Heart left ventricle (tissue), 16 donors: ENCODE measurements at regions of chr19 and their contacts with region 1.

Region 1: DNA sequence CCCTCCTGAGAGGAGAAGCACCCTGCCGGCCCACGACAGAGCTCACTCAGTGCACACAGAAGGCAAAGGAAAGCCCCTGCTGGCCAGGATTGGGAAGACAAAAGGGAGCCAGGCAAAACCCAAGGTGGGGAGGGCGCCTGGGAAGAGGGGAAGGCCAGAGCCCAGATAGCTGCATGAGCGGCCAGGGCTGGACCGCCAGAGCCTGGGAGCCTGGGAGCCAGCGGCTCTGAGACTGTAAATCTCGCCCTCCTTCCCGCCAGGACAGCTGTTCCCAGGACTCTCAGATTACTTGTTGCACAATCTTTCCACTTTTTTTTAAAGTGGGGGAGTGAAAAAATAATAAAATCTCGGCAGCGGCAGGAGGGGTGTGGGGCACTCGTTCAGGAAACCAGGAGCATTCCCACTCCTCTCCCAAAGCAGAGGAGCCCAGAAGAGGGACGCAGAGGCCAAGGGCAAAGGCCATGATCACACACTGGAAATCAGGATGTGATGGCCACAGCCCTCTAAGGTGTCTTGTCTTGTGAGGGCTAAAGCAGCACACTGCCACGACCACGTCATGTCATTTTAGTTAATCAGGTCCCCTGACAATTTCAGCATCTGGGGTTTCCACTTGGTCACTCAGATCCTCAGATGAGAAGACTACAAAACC is 19.6 kb upstream of the EPHX3 start:
- DNase-seq: peak; percentile 86 to 92 (median 89)
- ATAC-seq: peak; percentile 67 to 76 (median 69)
- H3K4me3 ChIP-seq: peak overlapping the region in 7 of 12 donors; percentile 14 to 44 (median 24)
- H3K27ac ChIP-seq: peak overlapping the region; percentile 78 to 99 (median 90)
- H3K4me1 ChIP-seq: peaks cover 20 to 73% (median 70%) of the 10 kb centered on the region in 12 donors
- H3K27me3 ChIP-seq: no peaks in the 10 kb centered on the region
- CTCF ChIP-seq: peak in 11 of 12 donors; percentile 24 to 71 (median 47)
- POLR2A ChIP-seq: no peak

Region 2: GRCh38 chr19:13888240-13888639 is 1363.6 kb before region 1 on chr19:
- intact Hi-C with region 1: no loop called
- DNase-seq: no peak
- ATAC-seq: no peak
- H3K4me3 ChIP-seq: no peak overlapping the region
- H3K27ac ChIP-seq: no peak overlapping the region
- H3K4me1 ChIP-seq: peaks cover 0 to 8% (median 0%) of the 10 kb centered on the region in 12 donors
- H3K27me3 ChIP-seq: no peaks in the 10 kb centered on the region
- CTCF ChIP-seq: no peak
- POLR2A ChIP-seq: no peak

Region 3: DNA sequence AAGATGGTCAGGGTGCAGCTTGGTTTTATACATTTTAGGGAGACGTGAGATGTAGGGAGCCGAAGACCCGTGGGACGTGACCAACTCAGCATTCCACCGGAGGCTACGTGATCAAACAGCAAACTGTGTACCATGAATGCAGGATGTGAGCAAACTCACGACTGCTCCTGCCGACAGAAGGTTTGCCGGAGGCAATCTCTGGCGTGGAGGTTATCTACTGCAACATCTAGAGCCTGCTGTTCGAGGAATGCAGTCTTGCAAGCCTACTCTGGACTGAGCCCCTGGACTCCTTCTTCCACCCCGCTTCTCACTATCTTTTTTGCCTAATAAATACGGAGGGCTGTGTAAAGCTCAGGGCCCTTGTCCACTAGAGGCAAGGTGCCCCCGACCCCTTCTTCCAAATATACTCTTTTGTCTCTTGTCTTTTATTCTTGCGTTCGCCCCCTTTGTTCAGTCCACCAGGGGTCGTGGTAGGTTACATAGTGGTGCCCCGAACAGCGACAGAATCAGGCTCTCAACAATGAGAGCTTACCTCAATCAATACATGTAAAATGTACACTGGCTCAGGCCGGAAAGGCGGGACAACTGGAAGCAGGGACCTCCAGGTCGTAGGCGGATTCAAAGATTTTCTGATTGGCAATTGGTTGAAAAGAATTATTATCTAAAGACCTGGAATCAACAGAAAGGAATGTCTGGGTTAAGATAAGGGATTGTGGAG is 178.8 kb before region 1 on chr19:
- intact Hi-C with region 1: no loop called
- DNase-seq: no peak
- ATAC-seq: no peak
- H3K4me3 ChIP-seq: no peak overlapping the region
- H3K27ac ChIP-seq: no peak overlapping the region
- H3K4me1 ChIP-seq: no peaks in the 10 kb centered on the region
- H3K27me3 ChIP-seq: peaks cover 0 to 11% (median 0%) of the 10 kb centered on the region in 9 donors
- CTCF ChIP-seq: no peak
- POLR2A ChIP-seq: no peak

Region 4: DNA sequence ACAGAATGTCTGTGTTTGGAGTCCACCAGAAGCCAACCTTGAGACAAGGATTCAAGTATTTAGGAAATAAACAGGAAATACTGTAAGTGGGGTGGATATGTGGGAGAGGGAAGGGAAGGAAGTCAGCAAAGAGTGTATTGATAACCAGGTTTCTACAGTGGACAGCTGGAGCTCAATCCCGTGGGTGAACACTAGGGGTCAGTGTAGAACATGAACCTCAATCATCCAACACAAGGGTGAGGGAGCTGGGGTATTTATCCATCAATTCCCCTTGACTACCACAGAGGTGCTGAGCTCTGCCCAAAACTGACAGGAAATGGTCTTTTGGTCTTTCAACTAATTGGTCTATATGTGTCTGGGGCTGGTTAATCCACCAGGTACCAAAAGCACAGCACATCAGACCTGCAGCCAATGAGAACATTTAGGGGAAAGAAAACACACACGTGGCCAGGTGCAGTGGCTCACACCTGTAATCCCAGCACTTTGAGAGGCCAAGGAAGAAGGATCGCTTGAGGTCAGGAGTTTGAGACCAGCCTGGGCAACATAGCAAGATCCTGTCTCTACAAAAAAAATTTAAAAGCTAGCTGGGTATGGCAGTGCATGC is 150.3 kb before region 1 on chr19:
- intact Hi-C with region 1: loop called in 3 of 10 experiments (anchors 10 kb)
- DNase-seq: no peak
- ATAC-seq: peak in 3 of 4 donors; percentile 53 to 75 (median 71)
- H3K4me3 ChIP-seq: no peak overlapping the region
- H3K27ac ChIP-seq: no peak overlapping the region
- H3K4me1 ChIP-seq: peaks cover 0 to 6% (median under 1%) of the 10 kb centered on the region in 12 donors
- H3K27me3 ChIP-seq: no peaks in the 10 kb centered on the region
- CTCF ChIP-seq: peak; percentile 63 to 79 (median 70)
- POLR2A ChIP-seq: no peak

Region 5: DNA sequence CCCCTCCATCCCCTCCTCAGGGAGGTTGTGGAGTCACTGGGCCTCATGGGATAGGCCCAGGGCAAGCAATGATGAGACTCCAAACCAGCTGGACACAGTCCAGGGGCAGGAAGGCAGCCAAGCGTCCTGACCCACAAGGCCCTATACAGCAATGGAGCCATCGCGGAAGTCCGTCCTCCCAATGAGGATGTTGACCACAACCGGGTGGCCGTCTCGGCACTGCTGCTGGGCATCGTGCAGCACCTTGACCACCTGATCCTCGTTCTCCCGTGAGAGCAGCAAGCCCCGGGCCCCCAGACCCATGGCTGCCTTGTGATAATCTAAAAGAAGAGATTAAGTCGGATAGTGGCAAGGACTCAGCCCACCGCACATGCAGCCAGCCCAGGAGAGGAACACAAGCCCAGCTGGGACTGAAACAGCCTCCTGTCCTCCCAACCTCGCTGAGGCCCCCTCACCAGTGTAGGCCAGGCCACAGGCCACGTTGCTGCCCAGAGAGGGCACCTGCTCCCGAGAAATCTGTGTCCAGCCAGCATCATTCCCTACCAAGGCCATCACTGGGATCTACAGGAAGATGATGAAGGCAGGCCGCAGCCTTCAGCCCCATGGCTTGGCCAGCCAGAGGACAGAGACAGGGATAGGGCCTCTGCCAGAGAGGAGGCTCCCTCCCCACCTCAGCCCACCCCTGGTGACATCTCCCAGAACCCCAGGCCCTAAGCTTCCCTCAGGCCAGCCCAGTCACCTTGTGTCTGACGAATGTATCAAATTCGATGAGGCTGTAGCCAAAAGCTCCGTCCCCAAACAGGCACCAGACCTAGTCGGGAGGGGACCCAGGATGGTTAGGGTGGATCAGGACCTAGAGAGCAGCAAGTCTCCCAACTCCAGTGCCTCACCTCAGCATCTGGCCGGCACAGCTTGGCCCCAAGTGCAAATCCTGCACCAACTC is 136.5 kb before region 1 on chr19:
- intact Hi-C with region 1: loop called in 2 of 10 experiments (anchors 5 to 10 kb)
- DNase-seq: peak; percentile 85 to 90 (median 87)
- ATAC-seq: peak; percentile 63 to 89 (median 70)
- H3K4me3 ChIP-seq: no peak overlapping the region
- H3K27ac ChIP-seq: peak overlapping the region in 11 of 12 donors; percentile 42 to 76 (median 55)
- H3K4me1 ChIP-seq: peaks cover 6 to 29% (median 16%) of the 10 kb centered on the region in 12 donors
- H3K27me3 ChIP-seq: no peaks in the 10 kb centered on the region
- CTCF ChIP-seq: no peak
- POLR2A ChIP-seq: no peak

Region 6: DNA sequence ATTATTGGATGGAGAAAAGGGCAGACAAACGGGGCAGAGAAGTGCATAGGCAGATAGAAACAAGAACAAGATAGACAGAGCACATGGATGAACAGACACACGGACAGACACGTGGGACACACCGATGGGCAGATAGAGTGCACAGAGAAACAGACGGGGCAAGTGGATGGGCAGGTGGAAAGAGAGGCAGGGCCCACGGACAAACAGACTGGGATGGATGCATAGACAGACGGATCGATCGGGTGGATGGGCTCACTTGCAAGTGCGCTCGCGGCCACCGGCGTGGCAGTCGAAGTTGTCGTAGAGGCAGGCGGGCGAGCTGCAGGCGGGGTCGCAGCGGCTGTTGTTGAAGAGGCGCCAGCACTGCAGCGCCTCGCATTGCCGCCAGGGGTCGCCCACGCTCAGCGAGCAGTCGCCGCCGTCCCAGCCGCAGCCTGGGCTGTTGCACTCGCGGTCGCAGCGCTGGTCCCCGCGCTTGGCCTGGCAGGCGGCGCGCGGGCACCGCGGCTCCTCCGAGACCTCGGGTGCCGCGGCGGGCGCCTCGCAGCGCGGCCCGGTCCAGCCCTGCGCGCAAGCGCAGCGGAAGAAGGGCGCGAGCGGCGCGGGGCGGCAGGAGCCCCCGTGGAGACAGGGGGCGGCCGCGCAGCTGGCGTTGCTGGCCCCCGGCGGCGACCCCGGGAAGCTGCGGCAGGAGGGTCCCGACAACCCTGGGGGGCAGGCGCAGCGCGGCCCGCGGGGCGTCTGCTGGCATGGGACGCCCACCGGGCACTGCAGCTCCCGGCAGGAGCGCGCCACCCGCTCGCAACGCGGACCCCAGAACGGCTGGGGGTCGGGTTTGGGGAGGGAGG is 74.4 kb before region 1 on chr19:
- intact Hi-C with region 1: loop called in 6 of 10 experiments (anchors 2 to 5 kb)
- DNase-seq: peak; percentile 76 to 93 (median 82)
- ATAC-seq: peak; percentile 41 to 91 (median 82)
- H3K4me3 ChIP-seq: peak overlapping the region in 7 of 12 donors; percentile 20 to 47 (median 34)
- H3K27ac ChIP-seq: peak overlapping the region in 1 of 12 donors; percentile 40
- H3K4me1 ChIP-seq: peaks cover 0 to 23% (median 2%) of the 10 kb centered on the region in 12 donors
- H3K27me3 ChIP-seq: peaks cover 0 to 11% (median 4%) of the 10 kb centered on the region in 9 donors
- CTCF ChIP-seq: peak; percentile 83 to 99 (median 96)
- POLR2A ChIP-seq: no peak

Region 7: DNA sequence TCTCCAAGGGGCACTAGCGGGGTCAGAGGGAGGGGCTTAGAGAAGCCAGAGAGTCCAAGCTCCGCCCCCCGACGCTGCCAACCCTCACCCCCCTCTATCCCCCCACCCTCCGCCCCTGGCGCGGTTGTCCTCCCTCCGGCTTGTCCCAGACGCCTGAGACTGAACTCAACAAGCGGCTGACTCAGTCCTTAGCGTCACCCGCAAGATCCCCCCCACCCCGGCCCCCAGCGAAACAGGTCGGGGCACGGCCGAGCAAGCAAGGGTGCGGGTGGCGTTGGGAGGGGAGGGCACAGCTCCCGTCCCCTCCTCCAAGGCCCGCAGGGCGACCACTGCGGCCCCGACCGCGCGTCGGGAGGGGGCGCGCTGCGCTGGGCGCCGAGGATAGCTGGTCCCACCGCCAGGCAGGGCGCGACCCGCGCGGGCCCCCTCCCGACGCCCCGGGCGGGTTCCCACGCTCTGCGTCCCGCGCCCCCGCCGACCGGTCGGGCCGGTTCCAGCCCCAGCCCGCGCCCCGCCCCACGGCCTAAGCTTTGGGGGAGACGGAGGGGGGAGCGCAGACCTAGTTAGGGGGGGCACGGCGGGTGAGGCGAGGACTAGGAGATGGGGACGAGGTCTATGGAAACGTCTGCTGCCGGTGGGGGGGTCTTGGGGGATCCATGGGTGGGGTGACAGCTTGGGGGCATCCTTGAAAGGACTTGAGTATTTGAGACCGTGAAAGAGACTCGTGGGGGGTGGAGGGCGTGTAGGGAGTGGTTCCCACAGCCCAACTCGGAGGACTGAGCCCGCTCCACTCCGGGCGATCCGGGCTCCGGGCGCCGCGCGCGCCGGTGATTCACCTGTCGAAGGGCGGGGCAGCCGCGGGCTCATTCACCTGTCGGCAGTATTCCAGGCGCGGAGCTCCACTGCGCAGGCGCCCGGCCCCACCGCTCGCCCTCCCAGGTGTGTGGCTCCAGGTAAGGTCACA is 56.2 kb before region 1 on chr19:
- intact Hi-C with region 1: loop called in 1 of 10 experiments (anchors 10 kb)
- DNase-seq: peak; percentile 48 to 78 (median 70)
- ATAC-seq: peak; percentile 37 to 66 (median 54)
- H3K4me3 ChIP-seq: peak overlapping the region in 11 of 12 donors; percentile 9 to 70 (median 53)
- H3K27ac ChIP-seq: peak overlapping the region; percentile 18 to 91 (median 52)
- H3K4me1 ChIP-seq: peaks cover 0 to 47% (median 13%) of the 10 kb centered on the region in 12 donors
- H3K27me3 ChIP-seq: peaks cover 9 to 63% (median 36%) of the 10 kb centered on the region in 9 donors
- CTCF ChIP-seq: peak in 6 of 12 donors; percentile 9 to 31 (median 22)
- POLR2A ChIP-seq: no peak

Region 8: DNA sequence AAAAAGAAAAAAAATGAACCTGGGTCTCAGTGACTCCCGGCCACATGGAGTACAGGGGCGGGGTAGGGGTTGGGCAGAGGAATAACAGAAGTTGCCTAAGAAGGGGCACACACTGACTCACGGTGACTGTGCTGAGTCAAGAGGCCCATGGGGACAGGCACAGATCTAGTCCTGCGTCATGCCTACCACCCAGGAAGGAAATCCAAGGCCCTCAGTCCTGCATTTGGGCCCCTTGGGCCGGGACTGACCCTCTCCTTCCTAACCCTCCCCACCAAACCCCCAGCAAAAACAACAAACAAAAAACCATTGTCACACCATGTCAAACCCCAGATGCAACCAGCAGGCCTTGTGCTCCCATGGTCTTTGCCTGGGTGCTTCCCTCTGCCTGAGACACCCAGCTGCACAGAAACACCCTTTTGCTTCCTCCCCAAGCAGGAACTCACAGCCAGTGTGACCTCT is 41.5 kb before region 1 on chr19:
- intact Hi-C with region 1: loop called in 2 of 10 experiments (anchors 5 kb)
- DNase-seq: peak in 4 of 5 donors; percentile 48 to 77 (median 70)
- ATAC-seq: peak; percentile 40 to 92 (median 78)
- H3K4me3 ChIP-seq: no peak overlapping the region
- H3K27ac ChIP-seq: peak overlapping the region in 9 of 12 donors; percentile 28 to 78 (median 50)
- H3K4me1 ChIP-seq: peaks cover 0 to 25% (median 6%) of the 10 kb centered on the region in 12 donors
- H3K27me3 ChIP-seq: peaks cover 0 to 6% (median 0%) of the 10 kb centered on the region in 9 donors
- CTCF ChIP-seq: no peak
- POLR2A ChIP-seq: no peak

Region 9: GRCh38 chr19:15555759-15556633 is 304.1 kb after region 1 on chr19:
- intact Hi-C with region 1: loop called in 1 of 10 experiments (anchors 10 kb)
- DNase-seq: peak; percentile 86 to 95 (median 91)
- ATAC-seq: peak; percentile 84 to 97 (median 95)
- H3K4me3 ChIP-seq: peak overlapping the region in 9 of 12 donors; percentile 23 to 49 (median 37)
- H3K27ac ChIP-seq: peak overlapping the region in 3 of 12 donors; percentile 12 to 31 (median 26)
- H3K4me1 ChIP-seq: peaks cover 0 to 18% (median 12%) of the 10 kb centered on the region in 12 donors
- H3K27me3 ChIP-seq: peaks cover 0 to 40% (median 9%) of the 10 kb centered on the region in 9 donors
- CTCF ChIP-seq: peak; percentile 66 to 85 (median 76)
- POLR2A ChIP-seq: no peak